ENCODE measurements at regions of chr6 and their contacts with region 1.

Region 1: GRCh38 chr6:134174672-134175198 is 122.3 kb upstream of the SLC2A12 start:
- DNase-seq: peak; percentile 87
- H3K4me3 Mint-ChIP-seq: peak overlapping the region; percentile 98
- H3K27ac Mint-ChIP-seq: peak overlapping the region; percentile 97
- H3K4me1 Mint-ChIP-seq: peaks cover 48% of the 10 kb centered on the region
- H3K27me3 Mint-ChIP-seq: peaks cover 4% of the 10 kb centered on the region

Region 2: GRCh38 chr6:134161036-134161435 is 13.7 kb before region 1 on chr6:
- intact Hi-C with region 1: no loop called
- DNase-seq: no peak
- H3K4me3 Mint-ChIP-seq: no peak overlapping the region
- H3K27ac Mint-ChIP-seq: no peak overlapping the region
- H3K4me1 Mint-ChIP-seq: no peaks in the 10 kb centered on the region
- H3K27me3 Mint-ChIP-seq: peaks cover 2% of the 10 kb centered on the region

Region 3: GRCh38 chr6:134196568-134197193 is 21.9 kb after region 1 on chr6:
- intact Hi-C with region 1: no loop called
- DNase-seq: no peak
- H3K4me3 Mint-ChIP-seq: no peak overlapping the region
- H3K27ac Mint-ChIP-seq: no peak overlapping the region
- H3K4me1 Mint-ChIP-seq: peaks cover 25% of the 10 kb centered on the region
- H3K27me3 Mint-ChIP-seq: no peaks in the 10 kb centered on the region

Region 4: GRCh38 chr6:134352786-134353480 is 178.2 kb after region 1 on chr6:
- intact Hi-C with region 1: loop called (anchors 2 kb)
- DNase-seq: no peak
- H3K4me3 Mint-ChIP-seq: no peak overlapping the region
- H3K27ac Mint-ChIP-seq: peak overlapping the region; percentile 75
- H3K4me1 Mint-ChIP-seq: peaks cover 26% of the 10 kb centered on the region
- H3K27me3 Mint-ChIP-seq: no peaks in the 10 kb centered on the region

Region 5: DNA sequence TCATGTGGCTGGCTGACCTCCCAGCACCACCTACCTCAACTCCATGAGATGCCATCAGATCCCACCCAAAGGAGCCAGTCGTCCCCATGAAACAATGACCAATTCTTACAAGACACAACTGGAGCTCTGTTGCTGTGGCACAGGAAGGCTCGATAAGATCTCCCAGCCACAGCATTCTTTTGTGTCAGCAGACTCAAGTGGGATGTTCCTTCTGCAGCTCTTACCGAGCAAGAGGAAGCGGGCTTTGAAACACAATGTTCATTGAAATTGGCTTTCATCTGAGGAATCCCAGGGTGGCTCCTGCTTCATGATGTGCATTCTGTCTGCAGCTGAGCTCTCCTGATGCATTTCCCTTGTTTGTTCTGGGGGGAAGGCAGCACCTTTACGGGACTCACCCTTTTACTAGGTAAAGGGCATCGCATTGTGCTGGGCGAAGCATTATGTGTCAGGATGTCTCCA is 365.2 kb after region 1 on chr6:
- intact Hi-C with region 1: loop called (anchors 2 kb)
- DNase-seq: peak; percentile 19
- H3K4me3 Mint-ChIP-seq: peak overlapping the region; percentile 65
- H3K27ac Mint-ChIP-seq: peak overlapping the region; percentile 23
- H3K4me1 Mint-ChIP-seq: peaks cover 36% of the 10 kb centered on the region
- H3K27me3 Mint-ChIP-seq: no peaks in the 10 kb centered on the region

Region 6: DNA sequence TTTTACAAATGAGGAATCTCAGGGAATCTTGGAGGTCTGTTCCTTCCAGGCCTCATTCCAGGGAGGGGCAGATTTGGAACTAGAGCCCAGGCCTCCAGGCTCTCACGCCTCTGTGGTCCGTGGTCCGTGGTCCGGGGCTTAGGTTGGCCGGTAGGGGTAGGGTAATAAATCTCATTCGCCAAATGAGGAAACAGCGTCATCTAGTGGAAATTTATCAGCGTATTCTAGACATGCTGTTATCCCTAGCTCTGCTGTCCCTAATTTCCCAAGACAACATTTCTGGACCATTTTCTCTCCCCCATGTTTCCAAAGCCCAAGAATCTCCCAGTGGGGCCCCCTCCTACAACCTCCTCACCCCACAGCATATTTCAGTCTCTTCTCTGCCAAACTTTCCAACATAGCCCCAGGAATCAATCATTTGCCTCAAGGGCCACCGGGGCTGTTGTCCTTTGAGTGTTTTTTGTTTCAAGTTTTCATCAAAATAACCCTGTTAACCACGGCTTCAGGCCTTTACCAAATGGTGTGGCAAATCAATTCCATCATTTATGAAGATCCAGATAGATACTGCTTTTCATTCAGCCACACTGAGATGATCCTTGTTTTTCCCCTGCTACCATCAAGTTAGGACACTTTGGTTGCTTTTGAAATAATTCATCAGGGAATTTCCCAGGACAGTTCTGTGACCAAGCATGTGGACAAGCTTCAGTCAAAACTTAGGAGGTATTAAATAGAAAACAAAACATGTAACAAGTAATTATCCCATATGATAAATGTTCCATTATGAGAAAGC is 648.4 kb after region 1 on chr6:
- intact Hi-C with region 1: loop called (anchors 1 kb)
- DNase-seq: no peak
- H3K4me3 Mint-ChIP-seq: no peak overlapping the region
- H3K27ac Mint-ChIP-seq: no peak overlapping the region
- H3K4me1 Mint-ChIP-seq: no peaks in the 10 kb centered on the region
- H3K27me3 Mint-ChIP-seq: no peaks in the 10 kb centered on the region

Region 7: DNA sequence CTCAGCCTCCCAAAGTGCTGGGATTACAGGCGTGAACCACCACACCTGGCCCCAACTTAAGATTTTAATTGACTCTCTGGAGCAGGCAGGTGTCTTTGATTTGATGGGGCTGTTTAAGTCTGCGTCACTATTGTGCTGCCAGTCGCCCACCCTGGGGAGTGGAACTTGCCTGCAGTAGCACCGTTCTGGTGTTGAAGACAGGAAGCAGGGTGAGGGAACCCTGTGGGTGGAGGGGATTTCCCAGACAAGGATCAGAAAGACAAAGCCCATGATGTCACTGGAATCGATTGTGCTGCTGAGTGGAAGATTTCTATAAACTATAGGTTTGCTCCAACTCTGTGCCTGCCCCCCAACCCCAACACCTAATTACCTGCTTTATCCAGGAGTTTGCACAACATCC is 764.2 kb after region 1 on chr6:
- intact Hi-C with region 1: loop called (anchors 2 kb)
- DNase-seq: no peak
- H3K4me3 Mint-ChIP-seq: no peak overlapping the region
- H3K27ac Mint-ChIP-seq: no peak overlapping the region
- H3K4me1 Mint-ChIP-seq: peaks cover 18% of the 10 kb centered on the region
- H3K27me3 Mint-ChIP-seq: no peaks in the 10 kb centered on the region

Measured in activated T-helper 2 cell treated with anti-CD3 and anti-CD28 coated beads, Interferon-gamma antibody, Interleukin-2, Interleukin-4, amounts not matched to agents 10 μg/mL and 5 μg/mL and 100 μg/mL, durations not matched to agents 14 hours and 24 hours and 36 hours (primary cell).